Activated B cell treated with CpG ODN at 0.5 μM for 24 hours (primary cell): ENCODE measurements at regions of chr1 and their contacts with region 1.

Region 1: DNA sequence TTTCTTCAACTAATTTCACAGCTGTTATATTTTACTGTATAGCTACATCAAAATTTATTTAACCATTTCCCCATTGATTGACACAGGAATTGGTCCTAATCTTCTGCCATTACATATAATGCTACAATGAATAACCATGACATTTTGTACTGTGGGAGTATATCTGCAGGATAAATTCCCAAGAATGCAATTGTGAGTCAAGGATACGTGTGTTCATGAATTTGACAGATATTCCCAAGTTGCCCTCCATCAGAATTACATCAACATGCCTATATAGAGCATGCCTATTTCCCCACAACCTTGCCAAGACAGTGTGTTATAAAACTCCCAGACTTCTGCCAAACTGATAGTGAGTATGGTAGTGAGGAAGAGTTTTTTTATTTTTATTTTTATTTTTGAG is 2.7 kb upstream of the TIE1 start:
- DNase-seq: no peak
- ATAC-seq: no peak
- H3K4me3 Mint-ChIP-seq: no peak overlapping the region
- H3K27ac Mint-ChIP-seq: no peak overlapping the region
- H3K4me1 Mint-ChIP-seq: no peaks in the 10 kb centered on the region
- H3K27me3 Mint-ChIP-seq: no peaks in the 10 kb centered on the region
- CTCF ChIP-seq: no peak

Region 2: DNA sequence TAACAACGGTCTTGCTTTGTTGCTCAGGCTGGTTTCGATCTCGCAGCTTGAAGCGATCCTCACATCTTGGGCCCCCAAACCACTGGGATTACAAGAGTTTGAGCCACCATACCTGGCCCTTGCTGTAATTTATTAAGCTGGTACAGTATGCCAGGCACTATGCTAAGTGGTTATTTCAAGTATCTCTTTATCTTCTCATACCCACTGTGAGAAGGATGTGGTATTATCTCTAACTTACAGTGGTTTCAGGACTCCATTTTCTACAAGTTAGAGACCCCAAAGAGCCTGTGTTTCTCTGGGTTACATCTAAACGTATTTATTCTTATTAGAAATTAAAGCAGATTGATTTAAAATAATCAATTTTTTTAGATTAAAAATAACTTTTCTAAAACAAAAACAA is 401.2 kb after region 1 on chr1:
- CTCF ChIA-PET with region 1: no interaction called
- POLR2A ChIA-PET with region 1: interaction called, 14 read pairs
- intact Hi-C with region 1: no loop called
- DNase-seq: no peak
- ATAC-seq: no peak
- H3K4me3 Mint-ChIP-seq: no peak overlapping the region
- H3K27ac Mint-ChIP-seq: no peak overlapping the region
- H3K4me1 Mint-ChIP-seq: no peaks in the 10 kb centered on the region
- H3K27me3 Mint-ChIP-seq: no peaks in the 10 kb centered on the region
- CTCF ChIP-seq: no peak